T-cell (primary cell): ENCODE measurements at regions of chr1 and their contacts with region 1.

Region 1: DNA sequence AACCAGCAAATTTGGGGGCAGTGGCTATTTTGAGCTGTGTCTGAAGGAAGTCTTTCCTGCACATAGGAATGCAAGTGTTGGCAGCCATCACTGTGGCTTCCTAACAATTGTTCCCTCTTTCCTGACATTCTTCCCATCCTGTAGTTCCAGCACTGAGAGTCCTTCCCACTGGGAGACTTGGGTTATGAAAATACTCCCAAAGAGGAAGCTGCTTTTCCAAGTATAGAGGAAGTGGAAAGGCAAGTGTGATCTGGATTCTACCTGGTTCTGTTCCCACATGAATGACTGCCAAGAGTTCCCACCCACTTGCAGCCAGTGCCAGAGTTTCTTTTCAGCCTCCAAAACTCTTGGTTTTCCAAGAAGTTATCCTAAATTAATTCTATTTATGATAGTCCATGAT is 98.5 kb upstream of the CD53 start:
- DNase-seq: no peak
- ATAC-seq: no peak
- H3K4me3 ChIP-seq: no peak overlapping the region
- H3K4me3 Mint-ChIP-seq: no peak overlapping the region
- H3K27ac ChIP-seq: no peak overlapping the region
- H3K27ac Mint-ChIP-seq: no peak overlapping the region
- H3K4me1 ChIP-seq: no peaks in the 10 kb centered on the region
- H3K4me1 Mint-ChIP-seq: peaks cover 0 to 11% (median 0%) of the 10 kb centered on the region in 3 donors
- H3K27me3 ChIP-seq: peaks cover 2 to 6% of the 10 kb centered on the region in 2 experiments
- H3K27me3 Mint-ChIP-seq: peaks cover 14 to 25% of the 10 kb centered on the region in 2 donors

Region 2: GRCh38 chr1:110136911-110137310 is 637.5 kb before region 1 on chr1:
- CTCF ChIA-PET with region 1: no interaction called
- POLR2A ChIA-PET with region 1: no interaction called
- DNase-seq: peak in 19 of 35 experiments; percentile 4 to 40 (median 17)
- ATAC-seq: peak in 3 of 4 experiments; percentile 15 to 64 (median 17)
- H3K4me3 ChIP-seq: no peak overlapping the region
- H3K4me3 Mint-ChIP-seq: no peak overlapping the region
- H3K27ac ChIP-seq: no peak overlapping the region
- H3K27ac Mint-ChIP-seq: no peak overlapping the region
- H3K4me1 ChIP-seq: peaks cover 0 to 6% of the 10 kb centered on the region in 2 experiments
- H3K4me1 Mint-ChIP-seq: peaks cover 12 to 13% (median 13%) of the 10 kb centered on the region in 3 donors
- H3K27me3 ChIP-seq: peaks cover 0 to 44% of the 10 kb centered on the region in 2 experiments
- H3K27me3 Mint-ChIP-seq: peaks cover 31 to 52% of the 10 kb centered on the region in 2 donors

Region 3: DNA sequence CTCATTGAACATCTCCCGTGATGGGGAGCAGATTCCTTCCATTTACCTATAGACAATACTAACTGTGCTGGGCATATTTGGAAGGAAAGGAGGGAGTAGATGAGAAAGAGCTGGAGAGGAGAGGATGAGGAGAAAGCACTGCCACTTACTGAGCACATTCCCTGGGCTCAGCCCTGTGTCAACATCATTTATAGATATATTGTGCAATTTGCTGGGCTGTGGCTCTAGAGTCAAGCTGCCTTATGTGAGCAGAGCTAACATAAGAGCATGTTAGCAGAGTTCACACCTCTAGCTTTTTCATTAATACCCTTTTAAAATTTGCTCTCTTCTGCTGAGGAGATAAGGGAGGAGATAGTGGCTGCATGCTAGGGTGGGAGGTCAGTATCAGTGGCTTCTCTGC is 76.2 kb after region 1 on chr1:
- CTCF ChIA-PET with region 1: interaction called in 1 of 2 experiments, 13 read pairs
- POLR2A ChIA-PET with region 1: no interaction called
- DNase-seq: no peak
- ATAC-seq: no peak
- H3K4me3 ChIP-seq: no peak overlapping the region
- H3K4me3 Mint-ChIP-seq: no peak overlapping the region
- H3K27ac ChIP-seq: no peak overlapping the region
- H3K27ac Mint-ChIP-seq: no peak overlapping the region
- H3K4me1 ChIP-seq: no peaks in the 10 kb centered on the region
- H3K4me1 Mint-ChIP-seq: peaks cover 0 to 2% (median 0%) of the 10 kb centered on the region in 3 donors
- H3K27me3 ChIP-seq: no peaks in the 10 kb centered on the region
- H3K27me3 Mint-ChIP-seq: peaks cover 0 to 6% of the 10 kb centered on the region in 2 donors

Region 4: GRCh38 chr1:111577814-111578213 is 803.4 kb after region 1 on chr1:
- CTCF ChIA-PET with region 1: no interaction called
- POLR2A ChIA-PET with region 1: interaction called in 1 of 2 experiments, 19 read pairs
- DNase-seq: no peak
- ATAC-seq: no peak
- H3K4me3 ChIP-seq: no peak overlapping the region
- H3K4me3 Mint-ChIP-seq: no peak overlapping the region
- H3K27ac ChIP-seq: no peak overlapping the region
- H3K27ac Mint-ChIP-seq: peak overlapping the region in 1 of 2 donors; percentile 9
- H3K4me1 ChIP-seq: peaks cover 0 to 5% of the 10 kb centered on the region in 2 experiments
- H3K4me1 Mint-ChIP-seq: peaks cover 0 to 9% (median 7%) of the 10 kb centered on the region in 3 donors
- H3K27me3 ChIP-seq: no peaks in the 10 kb centered on the region
- H3K27me3 Mint-ChIP-seq: no peaks in the 10 kb centered on the region